ENCODE measurements at regions of chr4 and their contacts with region 1.

Region 1: DNA sequence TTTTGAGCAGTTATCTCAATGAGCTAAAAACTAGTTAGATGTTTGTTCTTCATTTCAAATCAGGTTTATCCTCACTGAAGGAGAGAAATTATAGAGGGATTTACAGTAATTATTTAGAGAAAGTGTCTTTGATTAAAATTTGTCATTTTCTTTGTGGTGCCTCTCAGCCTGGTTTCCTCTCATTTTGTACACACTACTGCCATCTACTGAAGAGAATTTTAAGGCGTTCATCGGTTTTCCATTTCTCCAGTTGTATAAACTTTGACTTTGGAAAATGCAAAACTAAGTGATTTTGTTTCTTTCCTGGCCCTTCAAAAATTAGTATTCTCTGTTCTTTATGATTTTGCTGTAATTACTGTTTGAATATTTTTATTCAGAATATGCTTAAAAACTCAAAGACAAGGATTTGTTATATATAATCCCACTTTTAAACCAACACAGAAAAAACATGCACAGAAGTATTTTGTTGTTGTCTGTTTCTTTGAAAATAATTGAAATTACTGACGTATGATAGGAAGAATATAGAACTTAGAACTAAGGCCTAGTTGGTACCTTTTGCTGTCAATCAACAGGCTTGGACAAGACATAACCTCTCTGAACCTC is 34.4 kb upstream of the ANXA3 start:
- DNase-seq: peak; percentile 53
- H3K4me3 ChIP-seq: no peak overlapping the region
- H3K27ac ChIP-seq: no peak overlapping the region
- H3K4me1 ChIP-seq: peaks cover 8% of the 10 kb centered on the region
- H3K27me3 ChIP-seq: no peaks in the 10 kb centered on the region
- CTCF ChIP-seq: peak; percentile 24 to 34
- POLR2A ChIP-seq: no peak

Region 2: GRCh38 chr4:77959566-77960338 is 557.4 kb before region 1 on chr4:
- CTCF ChIA-PET with region 1: interaction called, 9 read pairs
- POLR2A ChIA-PET with region 1: no interaction called
- dilution Hi-C with region 1: no loop called
- intact Hi-C with region 1: loop called (anchors 1 kb)
- DNase-seq: peak; percentile 55
- H3K4me3 ChIP-seq: no peak overlapping the region
- H3K27ac ChIP-seq: no peak overlapping the region
- H3K4me1 ChIP-seq: no peaks in the 10 kb centered on the region
- H3K27me3 ChIP-seq: no peaks in the 10 kb centered on the region
- CTCF ChIP-seq: peak; percentile 27 to 45
- POLR2A ChIP-seq: no peak

Region 3: GRCh38 chr4:78493731-78494130 is 23.4 kb before region 1 on chr4:
- CTCF ChIA-PET with region 1: no interaction called
- POLR2A ChIA-PET with region 1: no interaction called
- dilution Hi-C with region 1: no loop called
- intact Hi-C with region 1: no loop called
- DNase-seq: no peak
- H3K4me3 ChIP-seq: no peak overlapping the region
- H3K27ac ChIP-seq: no peak overlapping the region
- H3K4me1 ChIP-seq: no peaks in the 10 kb centered on the region
- H3K27me3 ChIP-seq: no peaks in the 10 kb centered on the region
- CTCF ChIP-seq: no peak
- POLR2A ChIP-seq: no peak

Region 4: GRCh38 chr4:78551479-78552351 is 34.6 kb after region 1 on chr4 and contains the start of gene ANXA3:
- CTCF ChIA-PET with region 1: no interaction called
- POLR2A ChIA-PET with region 1: no interaction called
- dilution Hi-C with region 1: no loop called
- intact Hi-C with region 1: loop called (anchors 1 kb)
- DNase-seq: peak; percentile 39
- H3K4me3 ChIP-seq: peak within 1 kb of the TSS; percentile 38 to 89 (median 63)
- H3K27ac ChIP-seq: peak within 1 kb of the TSS; percentile 98
- H3K4me1 ChIP-seq: peaks cover 26% of the 10 kb centered on the region
- H3K27me3 ChIP-seq: no peaks in the 10 kb centered on the region
- CTCF ChIP-seq: peak in 1 of 2 donors; percentile 4
- POLR2A ChIP-seq: peak; percentile 63
- total RNA-seq, gene ANXA3: 73.8 and 78.4 TPM in 2 replicates

Region 5: DNA sequence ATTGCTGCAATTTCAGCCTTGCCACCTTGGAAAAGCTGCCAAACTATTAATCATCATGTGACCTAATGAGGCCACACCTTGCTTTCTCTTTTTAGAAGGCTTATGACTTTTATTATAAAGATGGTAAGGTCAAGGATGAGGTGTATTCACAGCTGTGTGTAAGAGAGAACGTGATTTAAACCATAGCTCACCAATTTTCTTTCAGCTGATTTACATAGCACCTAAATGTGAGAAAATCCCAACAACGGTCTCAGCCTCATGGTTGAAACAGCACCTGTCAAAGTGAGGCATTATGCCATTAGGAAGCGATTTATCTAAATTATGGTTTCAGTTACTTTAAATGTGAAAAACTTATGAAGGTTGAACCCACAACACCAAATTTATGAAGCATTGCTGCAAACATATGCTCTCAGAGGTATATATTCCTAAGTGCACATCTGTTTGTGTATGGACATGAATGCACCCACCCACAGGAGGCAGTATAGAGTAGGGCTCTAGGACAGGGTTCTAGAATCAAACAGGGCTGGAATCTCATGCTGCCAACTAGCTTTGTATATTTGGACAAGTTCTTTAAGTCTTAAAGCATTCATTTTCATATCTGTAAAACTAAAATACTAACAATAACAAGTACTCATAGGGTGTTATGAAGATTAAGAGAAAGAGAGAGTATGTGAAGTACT is 75.1 kb after region 1 on chr4:
- CTCF ChIA-PET with region 1: no interaction called
- POLR2A ChIA-PET with region 1: no interaction called
- dilution Hi-C with region 1: no loop called
- intact Hi-C with region 1: loop called (anchors 5 kb)
- DNase-seq: no peak
- H3K4me3 ChIP-seq: no peak overlapping the region
- H3K27ac ChIP-seq: no peak overlapping the region
- H3K4me1 ChIP-seq: peaks cover 17% of the 10 kb centered on the region
- H3K27me3 ChIP-seq: no peaks in the 10 kb centered on the region
- CTCF ChIP-seq: no peak
- POLR2A ChIP-seq: no peak

Measured in endothelial cell of umbilical vein (primary cell).